GM10248 (cell line): ENCODE measurements at regions of chr6 and their contacts with region 1.

Region 1: DNA sequence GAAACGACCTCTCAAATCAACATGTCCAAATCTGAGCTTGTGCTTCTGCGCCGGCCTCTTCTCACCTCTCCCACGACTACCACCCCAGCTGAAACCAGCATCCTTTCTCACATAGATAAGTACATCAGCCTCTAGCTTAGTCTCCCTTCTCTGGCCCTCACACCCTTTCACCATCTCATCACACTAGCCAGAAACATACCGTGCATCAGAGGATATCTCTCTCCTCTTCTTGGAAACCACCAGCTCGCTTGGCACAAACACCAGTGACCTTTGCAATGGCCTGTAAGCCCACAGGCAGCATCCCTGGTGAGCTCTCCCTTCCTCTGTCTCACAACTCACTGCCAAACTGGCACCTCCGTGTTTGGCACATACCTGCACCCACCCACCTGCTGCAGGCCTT is 291.8 kb downstream of the EYA4 start:
- DNase-seq: no peak
- CTCF ChIP-seq: no peak

Region 2: DNA sequence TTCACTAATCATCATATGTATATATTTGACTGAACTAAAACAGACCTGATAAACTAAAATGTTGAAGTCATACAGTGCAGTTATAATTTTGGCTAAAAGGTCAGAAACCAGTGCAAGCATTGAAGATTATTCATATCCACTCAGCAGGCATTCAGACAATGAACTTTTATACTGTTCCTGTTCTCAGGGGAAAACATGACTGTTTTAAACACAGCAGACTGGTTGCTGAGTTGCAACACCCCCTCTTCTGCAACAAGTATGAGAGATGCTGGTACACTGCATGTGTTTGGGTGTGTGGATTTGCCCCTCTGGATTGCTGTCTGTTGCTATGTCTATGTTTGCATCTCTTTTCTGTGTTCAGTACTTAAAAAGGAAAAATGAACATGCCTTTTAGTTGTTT is 85.0 kb before region 1 on chr6:
- CTCF ChIA-PET with region 1: no interaction called
- POLR2A ChIA-PET with region 1: no interaction called
- DNase-seq: no peak
- CTCF ChIP-seq: no peak

Region 3: GRCh38 chr6:133487174-133487573 is 45.7 kb before region 1 on chr6:
- CTCF ChIA-PET with region 1: no interaction called
- POLR2A ChIA-PET with region 1: no interaction called
- DNase-seq: no peak
- CTCF ChIP-seq: no peak

Region 4: GRCh38 chr6:133551847-133552341 is 19.0 kb after region 1 on chr6:
- CTCF ChIA-PET with region 1: interaction called, 13 read pairs
- POLR2A ChIA-PET with region 1: no interaction called
- DNase-seq: no peak
- CTCF ChIP-seq: no peak